ENCODE measurements at regions of chr3 and their contacts with region 1.

Region 1: DNA sequence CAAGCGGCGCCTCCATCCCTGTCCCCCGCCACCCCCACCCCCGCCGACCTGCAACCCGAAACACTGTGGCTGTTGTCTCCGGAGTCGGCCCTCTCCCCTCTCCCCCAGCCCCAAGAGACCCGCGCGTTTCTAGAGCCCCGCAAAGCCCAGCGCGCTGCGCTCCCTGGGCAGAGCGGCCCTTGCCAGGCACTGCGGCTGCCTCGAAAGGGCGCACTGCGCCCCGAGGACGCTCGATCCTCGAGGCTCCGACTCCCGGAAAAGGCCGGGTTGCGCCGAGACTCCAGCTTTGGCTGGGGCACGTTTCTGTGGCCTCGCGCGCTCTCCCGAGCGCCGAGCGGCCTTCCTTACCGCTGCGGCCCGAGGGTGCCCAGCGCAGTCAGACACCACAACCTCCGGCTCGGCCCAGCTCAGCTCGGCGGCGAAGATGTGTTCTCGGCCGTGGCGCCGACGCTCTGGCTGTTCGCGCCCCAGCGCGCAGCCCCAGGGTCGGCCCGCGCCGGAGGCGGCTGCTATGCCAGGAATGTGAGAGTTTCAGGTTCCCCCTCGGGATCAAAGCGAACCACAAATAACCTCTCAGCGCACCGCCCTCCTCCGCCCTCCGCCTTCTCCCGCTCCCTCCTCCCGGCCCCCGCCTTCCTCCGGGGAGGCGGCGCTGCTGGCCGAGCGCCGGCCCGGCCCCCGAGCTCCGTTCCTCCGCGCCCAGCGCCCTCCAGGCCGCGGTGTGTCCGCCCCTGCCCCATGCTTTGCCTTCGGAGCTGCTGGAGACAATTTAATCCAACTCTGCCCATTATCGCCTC is at the start of gene AMOTL2:
- DNase-seq: peak; percentile 82
- H3K4me3 ChIP-seq: peak within 1 kb of the TSS; percentile 99
- CTCF ChIP-seq: no peak

Region 2: DNA sequence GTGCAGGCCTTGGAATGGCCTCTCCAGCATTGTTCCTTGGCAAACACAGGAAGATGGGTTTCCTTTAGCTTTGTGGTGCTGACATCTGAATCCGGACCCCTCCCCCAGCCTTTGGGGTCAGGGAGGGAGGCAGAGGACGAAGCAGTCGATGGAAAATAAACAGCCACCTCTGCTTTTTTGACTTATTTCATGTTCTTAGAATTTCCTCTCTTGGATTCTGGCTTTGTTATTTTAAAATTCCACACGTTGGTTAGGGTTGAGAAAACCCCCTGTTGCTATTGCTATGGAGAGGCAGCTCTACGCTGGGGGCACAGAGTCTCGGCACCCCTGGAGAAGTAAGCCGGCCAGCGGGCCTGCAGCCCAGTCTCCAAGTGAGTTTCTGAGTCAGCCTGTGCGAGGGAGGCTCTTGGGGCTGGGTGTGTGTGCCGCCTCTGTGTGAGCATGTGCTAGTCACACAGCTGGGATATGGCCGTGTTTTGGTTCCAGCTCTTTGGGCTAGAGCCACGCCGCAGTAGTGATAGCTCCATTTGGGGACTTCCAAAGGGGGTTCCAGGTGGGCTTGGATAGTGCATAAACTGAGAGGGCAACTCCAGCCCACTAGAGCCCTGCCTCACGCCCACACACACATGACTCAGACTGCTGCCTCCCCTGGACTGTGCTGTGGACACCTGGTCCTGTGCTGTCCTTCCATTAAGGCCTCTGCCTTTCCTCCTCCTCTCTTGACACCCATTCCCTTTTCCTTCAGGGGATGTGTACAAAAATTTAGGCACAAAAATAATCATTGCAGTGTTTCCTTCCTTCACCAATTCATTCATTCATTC is 58.7 kb before region 1 on chr3:
- CTCF ChIA-PET with region 1: interaction called, 3 read pairs
- POLR2A ChIA-PET with region 1: interaction called, 38 read pairs
- DNase-seq: no peak
- H3K4me3 ChIP-seq: no peak overlapping the region
- CTCF ChIP-seq: no peak

Region 3: GRCh38 chr3:134357261-134358184 is 16.7 kb before region 1 on chr3:
- CTCF ChIA-PET with region 1: interaction called, 5 read pairs
- POLR2A ChIA-PET with region 1: interaction called, 60 read pairs
- DNase-seq: peak; percentile 88
- H3K4me3 ChIP-seq: no peak overlapping the region; the same call in 1 of the 2 replicates
- CTCF ChIP-seq: no peak

Region 4: DNA sequence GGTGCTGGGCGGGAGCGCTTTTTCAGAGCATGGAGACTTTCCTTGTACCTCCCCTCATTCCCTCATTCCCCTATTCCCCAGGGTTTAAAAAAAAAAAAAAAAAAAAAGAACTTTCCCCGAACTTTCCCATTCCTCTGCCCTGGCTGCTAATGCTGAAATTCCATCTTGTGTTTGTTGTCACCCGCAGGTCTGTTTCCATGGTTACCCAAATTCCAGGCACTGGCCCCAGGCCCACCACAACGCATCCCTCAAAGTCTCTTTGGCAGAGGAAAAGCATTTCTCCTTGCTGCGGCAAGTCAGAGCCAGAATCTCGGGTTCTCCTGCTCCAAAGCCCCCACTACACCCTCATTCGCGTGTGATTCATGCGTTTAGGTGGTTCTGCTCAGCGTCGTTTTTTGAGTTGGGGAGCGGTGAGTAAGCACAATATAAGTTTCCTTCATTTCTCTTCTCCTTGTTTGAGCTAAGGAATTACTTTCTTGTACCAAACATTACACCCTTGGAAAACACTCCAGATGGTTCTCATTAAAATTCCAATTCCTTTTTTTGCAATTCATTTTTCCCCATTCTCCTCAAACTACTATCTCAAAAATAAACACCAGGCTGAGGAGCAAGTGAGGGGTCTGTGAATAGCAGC is 90.0 kb after region 1 on chr3:
- CTCF ChIA-PET with region 1: interaction called, 5 read pairs
- POLR2A ChIA-PET with region 1: interaction called, 24 read pairs
- DNase-seq: peak; percentile 100
- H3K4me3 ChIP-seq: no peak overlapping the region
- CTCF ChIP-seq: no peak

Region 5: DNA sequence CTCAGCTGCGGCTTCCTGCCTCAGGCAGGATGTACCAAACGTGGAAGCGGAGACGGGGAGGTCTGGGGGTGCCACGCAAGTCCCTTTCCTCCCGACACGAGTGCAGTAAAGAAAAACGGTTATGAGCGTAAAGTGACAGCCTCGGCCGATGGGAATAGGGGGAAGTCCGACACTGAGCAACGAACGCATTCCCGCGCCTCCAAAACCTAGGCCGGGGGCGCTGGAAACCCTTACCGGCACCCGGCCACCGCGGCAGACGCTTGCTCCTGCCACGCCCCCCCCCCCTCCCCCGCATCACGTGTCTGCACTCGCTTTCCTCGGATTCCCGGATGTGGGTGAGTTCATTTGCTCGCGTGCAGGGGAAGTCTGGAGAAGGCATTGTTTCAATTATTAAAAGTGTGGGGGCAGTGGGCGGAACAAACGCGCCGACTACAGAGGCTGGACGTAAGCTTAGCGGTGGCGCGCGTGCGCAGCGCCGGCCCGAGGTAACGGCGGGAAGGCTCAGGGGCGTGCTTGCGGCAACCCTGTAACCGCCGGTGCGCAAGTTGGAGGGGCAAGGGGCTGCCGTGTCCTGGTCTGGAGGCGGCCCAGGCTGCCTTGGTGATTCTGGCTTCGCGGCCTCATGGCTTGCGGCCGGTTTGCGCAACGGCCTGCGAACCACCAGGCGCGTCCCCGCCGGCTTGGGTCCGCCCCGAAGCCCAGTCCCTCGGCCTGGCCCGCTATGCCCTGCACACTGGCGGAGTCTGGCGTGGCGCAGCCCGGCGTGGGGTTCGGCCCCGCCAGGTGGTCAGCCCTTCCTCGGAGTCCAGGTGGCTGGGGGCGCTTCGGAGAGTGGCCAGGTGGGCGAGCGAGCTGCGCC is 111.8 kb after region 1 on chr3 and contains the starts of genes ANAPC13 and CEP63:
- CTCF ChIA-PET with region 1: interaction called, 13 read pairs
- POLR2A ChIA-PET with region 1: interaction called, 24 read pairs
- DNase-seq: peak; percentile 96
- H3K4me3 ChIP-seq: peak within 1 kb of the TSS; percentile 82
- CTCF ChIP-seq: no peak

Region 6: GRCh38 chr3:134607054-134608022 is 233.1 kb after region 1 on chr3:
- CTCF ChIA-PET with region 1: no interaction called
- POLR2A ChIA-PET with region 1: no interaction called
- DNase-seq: no peak
- H3K4me3 ChIP-seq: no peak overlapping the region
- CTCF ChIP-seq: no peak